ENCODE measurements at regions of chr1 and their contacts with region 1.

Region 1: DNA sequence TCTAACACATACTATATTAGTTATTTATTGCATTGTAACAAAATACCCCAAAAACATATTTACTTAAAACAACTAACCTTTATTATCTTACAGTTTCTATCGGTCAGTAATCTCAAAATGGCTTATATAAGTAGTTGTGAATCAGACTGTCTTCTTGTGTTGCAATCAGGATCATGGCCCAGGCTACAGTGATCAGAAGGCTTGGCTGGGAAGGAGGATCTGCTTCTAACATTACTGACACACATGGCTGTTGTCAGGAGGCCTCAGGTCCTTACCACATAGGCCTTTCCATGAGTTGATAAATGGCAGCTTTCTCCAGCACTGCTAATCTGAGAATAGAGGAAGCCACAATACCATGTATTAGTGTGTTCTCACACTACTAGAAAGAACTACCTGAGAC is 33.7 kb downstream of the CFH start:
- DNase-seq: no peak
- H3K4me3 ChIP-seq: no peak overlapping the region
- H3K27ac ChIP-seq: no peak overlapping the region
- H3K4me1 ChIP-seq: no peaks in the 10 kb centered on the region
- H3K27me3 ChIP-seq: no peaks in the 10 kb centered on the region
- CTCF ChIP-seq: no peak
- POLR2A ChIP-seq: no peak

Region 2: DNA sequence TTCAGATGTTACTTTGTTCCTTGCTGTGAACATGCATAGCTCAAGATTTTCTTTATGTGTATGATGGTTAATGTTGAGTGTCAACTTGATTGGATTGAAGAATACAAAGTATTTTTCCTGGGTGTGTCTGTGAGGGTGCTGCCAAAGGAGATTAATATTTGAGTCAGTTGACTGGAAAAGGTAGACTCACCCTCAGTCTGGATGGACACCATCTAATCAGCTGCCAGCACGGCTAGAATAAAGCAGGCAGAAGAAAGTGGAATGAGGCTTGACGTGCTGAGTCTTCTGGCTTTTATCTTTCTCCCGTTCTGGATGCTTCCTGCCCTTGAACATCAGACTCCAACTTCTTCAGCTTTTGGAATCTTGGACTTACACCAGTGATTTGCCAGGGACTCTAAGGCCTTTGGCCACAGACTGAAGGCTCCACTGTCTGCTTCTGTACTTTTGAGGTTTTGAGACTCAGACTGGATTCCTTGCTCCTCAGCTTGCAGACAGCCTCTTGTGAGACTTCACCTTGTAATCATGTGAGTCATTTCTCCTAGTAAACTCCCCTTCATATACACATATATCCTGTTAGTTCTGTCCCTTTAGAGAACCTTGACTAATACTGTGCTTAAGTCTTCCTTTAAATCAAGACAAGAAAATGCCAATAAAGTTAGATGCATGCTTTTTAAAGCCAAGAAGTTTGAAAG is 703.9 kb before region 1 on chr1:
- intact Hi-C with region 1: loop called (anchors 5 kb)
- DNase-seq: no peak
- H3K4me3 ChIP-seq: no peak overlapping the region
- H3K27ac ChIP-seq: no peak overlapping the region
- H3K4me1 ChIP-seq: no peaks in the 10 kb centered on the region
- H3K27me3 ChIP-seq: no peaks in the 10 kb centered on the region
- CTCF ChIP-seq: no peak
- POLR2A ChIP-seq: no peak

Region 3: GRCh38 chr1:196425513-196425912 is 260.0 kb before region 1 on chr1:
- intact Hi-C with region 1: no loop called
- DNase-seq: no peak
- H3K4me3 ChIP-seq: no peak overlapping the region
- H3K27ac ChIP-seq: no peak overlapping the region
- H3K4me1 ChIP-seq: no peaks in the 10 kb centered on the region
- H3K27me3 ChIP-seq: no peaks in the 10 kb centered on the region
- CTCF ChIP-seq: no peak
- POLR2A ChIP-seq: no peak